PC-9 (cell line): ENCODE measurements at regions of chr5 and their contacts with region 1.

Region 1: DNA sequence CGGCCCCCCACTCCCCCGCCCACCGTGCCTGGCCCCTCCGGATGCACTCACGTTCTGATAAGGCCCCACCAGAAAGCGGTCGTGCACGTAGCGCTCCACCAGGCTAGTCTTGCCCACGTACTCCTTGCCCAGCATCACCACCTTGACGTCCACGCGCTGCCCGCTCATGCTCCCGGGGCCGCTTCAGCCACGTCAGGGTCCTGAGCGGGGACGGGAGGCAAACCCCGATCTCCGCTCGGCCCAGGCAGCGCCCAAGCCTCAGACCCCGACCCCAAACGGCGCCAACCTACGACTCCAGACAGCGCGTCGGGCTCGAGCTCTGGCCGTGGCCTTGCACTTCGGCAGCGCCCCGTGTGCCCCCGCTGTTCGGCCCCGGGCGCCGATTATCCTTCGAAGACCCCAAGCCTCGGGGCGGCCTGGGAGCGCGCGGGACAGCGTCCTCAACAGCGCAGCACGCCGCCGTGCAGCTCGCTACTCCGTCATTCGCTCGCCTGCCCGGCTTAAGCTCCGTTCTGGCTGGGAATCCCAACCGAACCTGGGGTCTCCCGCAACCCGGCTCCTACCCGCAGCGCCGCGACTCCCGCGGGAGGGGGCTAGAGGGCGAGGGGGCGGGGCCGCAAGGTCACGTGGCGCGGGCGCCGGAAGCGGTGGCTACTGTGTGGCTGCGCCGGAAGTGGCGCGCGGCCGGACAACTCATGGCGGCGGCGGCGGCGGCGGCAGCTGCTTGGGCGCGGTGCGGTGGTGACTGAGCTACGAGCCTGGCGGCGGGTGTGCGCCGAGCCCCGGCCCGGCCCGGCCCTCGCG is at the starts of genes PRELID1 and RAB24:
- DNase-seq: peak; percentile 61 to 91
- H3K4me3 ChIP-seq: peak within 1 kb of the TSS; percentile 100
- H3K27ac ChIP-seq: peak within 1 kb of the TSS; percentile 39
- H3K4me1 ChIP-seq: peaks cover 40% of the 10 kb centered on the region
- H3K27me3 ChIP-seq: no peaks in the 10 kb centered on the region
- CTCF ChIP-seq: no peak; the same call in 1 of the 2 replicates
- total RNA-seq, gene PRELID1: 189 and 209 TPM in 2 replicates
- total RNA-seq, gene RAB24: 16.9 and 25.2 TPM in 2 replicates

Region 2: DNA sequence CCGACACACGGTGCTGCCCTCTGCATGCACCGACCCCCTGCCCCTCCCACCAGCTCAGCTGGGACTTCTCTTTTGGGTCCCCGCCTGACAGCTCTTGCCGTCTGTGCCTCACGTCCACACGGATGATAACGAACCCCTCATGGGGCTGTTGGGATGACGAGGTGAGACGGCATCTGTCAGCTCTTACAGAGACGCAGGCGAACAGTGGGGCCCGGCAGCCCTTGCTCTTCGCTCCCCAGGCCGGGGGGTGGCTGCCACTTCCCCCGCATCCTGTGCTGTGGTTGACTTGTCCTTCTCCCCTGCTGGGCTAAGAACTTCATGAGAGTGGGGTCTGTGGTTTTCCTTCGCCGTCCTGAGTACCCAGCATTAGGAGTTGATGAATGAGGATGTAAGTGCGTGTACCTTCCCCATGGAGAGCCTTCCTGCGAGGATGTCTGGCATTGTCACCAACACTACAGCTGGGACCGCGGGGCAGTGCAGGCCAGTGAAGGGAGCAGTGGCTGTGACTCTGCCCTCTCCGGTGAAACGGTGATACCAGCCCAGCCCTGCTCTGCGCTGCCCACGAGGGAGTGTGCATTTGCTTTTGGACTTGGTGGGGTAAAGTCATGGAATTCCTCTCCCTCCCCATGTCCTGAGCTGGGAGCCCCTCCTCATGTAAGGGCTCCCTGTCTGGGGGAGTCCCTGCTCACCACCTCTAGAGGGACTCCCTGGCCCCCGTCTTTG is 427.4 kb before region 1 on chr5:
- CTCF ChIA-PET with region 1: no interaction called
- POLR2A ChIA-PET with region 1: no interaction called
- intact Hi-C with region 1: no loop called
- DNase-seq: no peak
- H3K4me3 ChIP-seq: no peak overlapping the region
- H3K27ac ChIP-seq: no peak overlapping the region
- H3K4me1 ChIP-seq: no peaks in the 10 kb centered on the region
- H3K27me3 ChIP-seq: no peaks in the 10 kb centered on the region
- CTCF ChIP-seq: no peak

Region 3: GRCh38 chr5:177133091-177133852 is 170.1 kb before region 1 on chr5 and contains the start of gene NSD1:
- CTCF ChIA-PET with region 1: no interaction called
- POLR2A ChIA-PET with region 1: no interaction called
- intact Hi-C with region 1: loop called (anchors 5 kb)
- DNase-seq: peak in 1 of 2 experiments; percentile 75
- H3K4me3 ChIP-seq: peak within 1 kb of the TSS; percentile 78
- H3K27ac ChIP-seq: no peak within 1 kb of the TSS
- H3K4me1 ChIP-seq: peaks cover 16% of the 10 kb centered on the region
- H3K27me3 ChIP-seq: no peaks in the 10 kb centered on the region
- CTCF ChIP-seq: no peak
- total RNA-seq, gene NSD1: 60.9 and 62.2 TPM in 2 replicates

Region 4: GRCh38 chr5:177194274-177194673 is 109.0 kb before region 1 on chr5:
- CTCF ChIA-PET with region 1: no interaction called
- POLR2A ChIA-PET with region 1: interaction called, 14 read pairs
- intact Hi-C with region 1: no loop called
- DNase-seq: peak; percentile 72 to 90
- H3K4me3 ChIP-seq: no peak overlapping the region
- H3K27ac ChIP-seq: no peak overlapping the region
- H3K4me1 ChIP-seq: peaks cover 12% of the 10 kb centered on the region
- H3K27me3 ChIP-seq: no peaks in the 10 kb centered on the region
- CTCF ChIP-seq: no peak

Region 5: DNA sequence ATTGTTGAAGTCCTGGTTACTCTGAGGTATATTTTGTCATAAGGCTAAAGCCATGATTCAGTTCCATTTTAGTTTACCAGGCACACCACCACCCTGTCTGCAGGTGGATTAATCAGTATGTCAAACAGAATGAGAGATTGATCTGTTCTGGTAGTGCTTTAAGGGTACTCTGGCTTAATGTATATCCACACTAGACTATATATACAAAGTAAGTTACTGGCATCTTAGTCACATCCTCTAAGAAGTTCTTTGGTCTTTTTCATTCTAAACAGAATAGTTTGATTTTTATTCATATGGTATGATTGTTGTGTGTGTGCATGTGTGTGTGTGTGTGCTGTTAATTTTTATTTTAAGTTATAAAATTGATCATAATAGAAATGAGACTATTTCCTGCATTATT is 61.6 kb before region 1 on chr5:
- CTCF ChIA-PET with region 1: no interaction called
- POLR2A ChIA-PET with region 1: no interaction called
- intact Hi-C with region 1: no loop called
- DNase-seq: no peak
- H3K4me3 ChIP-seq: no peak overlapping the region
- H3K27ac ChIP-seq: no peak overlapping the region
- H3K4me1 ChIP-seq: no peaks in the 10 kb centered on the region
- H3K27me3 ChIP-seq: no peaks in the 10 kb centered on the region
- CTCF ChIP-seq: no peak

Region 6: DNA sequence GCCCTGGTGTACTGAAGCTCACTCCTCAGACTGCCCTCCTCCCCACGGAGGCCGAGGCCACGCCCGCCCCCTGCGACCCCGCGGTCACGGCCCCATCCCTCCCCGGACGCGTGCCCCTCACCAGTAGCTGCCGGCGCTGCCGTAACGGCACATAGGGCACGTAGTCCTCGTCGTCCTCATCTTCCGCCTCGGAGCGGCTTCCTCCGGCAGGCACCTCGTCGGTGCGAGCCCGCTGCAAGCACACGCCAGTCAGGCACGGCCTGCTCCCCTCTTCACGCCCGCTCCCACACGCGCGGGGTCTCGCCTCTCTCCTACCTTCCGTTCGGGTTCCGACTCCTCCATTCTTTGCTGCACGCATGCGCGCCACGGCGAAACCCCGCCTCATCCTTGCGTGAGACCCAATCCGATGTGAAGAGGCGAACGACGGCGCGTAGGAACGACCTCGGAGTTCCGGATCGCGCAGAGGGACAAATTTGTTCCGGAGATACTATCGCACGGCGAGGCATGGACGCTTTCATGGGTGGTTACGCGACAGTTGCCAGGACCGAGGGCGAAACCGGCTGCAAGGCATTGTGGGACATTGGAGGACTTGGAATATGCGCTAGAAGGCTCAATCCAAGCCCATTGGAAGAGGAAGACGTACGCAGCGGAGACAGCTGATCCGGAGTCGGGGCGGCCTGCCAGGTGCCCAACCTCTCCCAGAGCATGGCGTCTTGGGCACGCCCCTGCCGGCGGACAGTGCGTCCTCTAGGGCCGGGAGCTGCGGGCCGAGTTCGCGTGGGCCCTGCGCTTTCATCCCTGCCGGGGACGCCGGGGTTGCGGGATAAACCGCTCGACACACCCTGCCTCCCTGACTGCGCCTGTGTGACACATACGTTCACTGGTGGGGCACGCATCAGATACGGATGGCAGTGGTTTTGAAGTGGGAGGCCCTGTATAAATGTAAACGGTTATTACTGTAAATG is 213.6 kb after region 1 on chr5 and contains the start of gene DDX41:
- CTCF ChIA-PET with region 1: no interaction called
- POLR2A ChIA-PET with region 1: no interaction called
- intact Hi-C with region 1: loop called (anchors 5 kb)
- DNase-seq: peak; percentile 96 to 98
- H3K4me3 ChIP-seq: peak within 1 kb of the TSS; percentile 93
- H3K27ac ChIP-seq: peak within 1 kb of the TSS; percentile 18
- H3K4me1 ChIP-seq: peaks cover 18% of the 10 kb centered on the region
- H3K27me3 ChIP-seq: no peaks in the 10 kb centered on the region
- CTCF ChIP-seq: no peak
- total RNA-seq, gene DDX41: 90.8 and 93.1 TPM in 2 replicates